Activated CD4-positive, alpha-beta memory T cell treated with anti-CD3 and anti-CD28 coated beads, Interleukin-2, amount 10 ng/mL, durations not matched to agents 7 days and 5 days (primary cell): ENCODE measurements at regions of chr3 and their contacts with region 1.

Region 1: GRCh38 chr3:10026084-10026890 is at the start of gene FANCD2:
- DNase-seq: peak; percentile 94
- H3K4me3 Mint-ChIP-seq: peak within 1 kb of the TSS; percentile 95
- H3K27ac Mint-ChIP-seq: peak within 1 kb of the TSS; percentile 93
- H3K4me1 Mint-ChIP-seq: peaks cover 53% of the 10 kb centered on the region
- H3K27me3 Mint-ChIP-seq: no peaks in the 10 kb centered on the region
- total RNA-seq, gene FANCD2: 54.3 to 60.8 TPM

Region 2: GRCh38 chr3:10010486-10011465 is 15.5 kb before region 1 on chr3:
- CTCF ChIA-PET with region 1: no interaction called
- POLR2A ChIA-PET with region 1: interaction called, 16 read pairs
- DNase-seq: peak; percentile 93
- H3K4me3 Mint-ChIP-seq: peak overlapping the region; percentile 23
- H3K27ac Mint-ChIP-seq: no peak overlapping the region
- H3K4me1 Mint-ChIP-seq: peaks cover 33% of the 10 kb centered on the region
- H3K27me3 Mint-ChIP-seq: no peaks in the 10 kb centered on the region